HEK293 (cell line): ENCODE measurements at regions of chrX and their contacts with region 1.

Region 1: GRCh38 chrX:48972220-48973167 is 850 bp upstream of the KCND1 start:
- H3K4me3 ChIP-seq: no peak overlapping the region
- H3K27ac ChIP-seq: no peak overlapping the region
- H3K4me1 ChIP-seq: peaks cover 5% of the 10 kb centered on the region; the same call in 1 of the 2 replicates
- CTCF ChIP-seq: 0 out of 2 replicates have a peak, but pooled peaks have one; percentile 57

Region 2: DNA sequence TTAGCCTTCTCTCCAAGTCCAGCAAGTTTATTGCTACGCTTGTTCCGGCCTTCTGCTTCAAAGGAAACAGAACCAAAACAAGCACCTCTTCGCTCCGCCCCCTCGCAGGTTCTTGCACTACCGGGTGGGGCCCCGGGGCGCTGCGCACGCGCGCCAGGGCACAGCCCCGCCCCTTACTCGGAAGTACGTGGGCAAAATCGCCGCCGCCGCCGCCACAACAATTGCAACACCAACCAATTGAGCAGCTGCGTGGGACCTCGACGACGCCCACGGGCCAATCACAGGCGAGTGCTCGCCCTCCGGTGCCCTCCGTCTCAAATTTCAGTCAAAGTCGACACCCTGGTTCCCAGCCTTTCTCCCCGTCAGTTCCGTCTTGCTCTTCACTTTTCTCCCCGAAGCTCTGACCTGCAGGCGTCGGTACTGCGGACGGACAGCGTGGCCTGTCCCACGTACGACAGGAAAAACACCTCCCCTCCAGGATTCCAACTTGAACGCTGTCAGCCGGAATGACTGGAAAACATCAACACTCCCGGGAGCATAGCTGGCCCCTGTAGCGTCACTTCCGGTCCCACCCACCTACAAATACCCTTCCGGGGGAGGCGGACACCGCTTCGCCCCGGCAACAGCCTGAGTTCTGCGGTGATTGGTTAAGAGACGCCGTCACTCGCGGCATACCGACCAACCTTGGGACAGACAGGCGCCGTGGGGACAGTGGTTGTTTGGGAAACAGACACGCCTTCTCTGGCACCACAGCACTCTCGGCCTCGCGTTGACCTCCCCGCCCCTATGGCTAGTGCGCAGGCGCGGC is 14.5 kb before region 1 on chrX:
- CTCF ChIA-PET with region 1: interaction called, 7 read pairs
- POLR2A ChIA-PET with region 1: interaction called, 20 read pairs
- H3K4me3 ChIP-seq: peak overlapping the region; percentile 67
- H3K27ac ChIP-seq: peak overlapping the region; percentile 74
- H3K4me1 ChIP-seq: peaks cover 3% of the 10 kb centered on the region; the same call in 1 of the 2 replicates
- CTCF ChIP-seq: no peak